Endothelial cell of umbilical vein (primary cell): ENCODE measurements at regions of chr11 and their contacts with region 1.

Region 1: GRCh38 chr11:70202898-70203748 is at the start of gene FADD:
- DNase-seq: peak; percentile 96
- H3K4me3 ChIP-seq: peak within 1 kb of the TSS; percentile 79 to 86 (median 86)
- H3K27ac ChIP-seq: peak within 1 kb of the TSS; percentile 98
- H3K4me1 ChIP-seq: peaks cover 13% of the 10 kb centered on the region
- H3K27me3 ChIP-seq: no peaks in the 10 kb centered on the region
- CTCF ChIP-seq: no peak
- POLR2A ChIP-seq: peak; percentile 93
- total RNA-seq, gene FADD: 42.5 and 45.1 TPM in 2 replicates

Region 2: DNA sequence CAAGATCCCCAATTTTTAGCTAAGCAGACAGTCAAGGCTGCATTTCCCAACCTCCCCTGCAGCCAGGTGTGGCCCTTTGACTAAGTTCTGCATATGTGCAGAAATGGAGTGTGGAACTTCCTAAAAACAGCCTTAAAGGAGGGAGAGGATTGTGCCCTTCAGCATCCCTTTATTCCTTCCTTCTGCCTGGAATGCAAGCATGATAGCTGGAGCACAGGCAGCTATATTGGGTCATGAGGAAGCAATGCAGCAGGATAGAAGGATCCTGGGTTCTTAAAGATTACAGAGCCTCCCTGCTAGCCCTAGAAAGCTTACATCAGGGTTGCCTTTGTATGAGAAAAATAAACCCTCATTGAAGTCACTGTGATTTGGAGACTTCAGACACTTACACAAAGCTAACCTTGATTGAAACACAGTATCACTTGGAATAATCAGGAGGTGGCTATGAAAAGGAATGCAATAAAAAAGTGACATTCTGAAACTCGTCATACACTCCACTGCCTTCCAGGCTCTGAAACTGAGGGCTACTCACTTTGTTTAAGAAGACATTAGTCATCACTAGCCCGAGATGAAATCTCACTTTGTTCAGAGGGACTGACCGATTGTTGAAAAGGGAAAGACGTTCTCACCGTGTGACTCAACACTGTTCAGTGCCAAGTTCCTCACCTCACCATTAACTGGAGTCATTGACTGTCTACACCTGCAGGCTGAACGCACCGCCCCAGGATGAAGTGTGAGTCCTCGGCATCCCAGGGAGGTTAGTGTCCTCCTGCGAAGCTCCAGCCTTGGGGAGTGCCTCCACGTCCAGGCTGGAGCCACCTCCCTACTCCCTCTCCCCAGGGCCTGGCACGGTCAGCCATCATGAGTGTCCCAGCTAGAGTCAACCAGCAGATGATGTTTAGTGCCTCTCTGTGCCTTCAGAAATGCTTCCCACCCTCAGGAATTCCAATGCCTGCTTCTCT is 30.2 kb after region 1 on chr11:
- CTCF ChIA-PET with region 1: interaction called, 3 read pairs
- POLR2A ChIA-PET with region 1: no interaction called
- dilution Hi-C with region 1: no loop called
- intact Hi-C with region 1: loop called (anchors 1 kb)
- DNase-seq: peak; percentile 79
- H3K4me3 ChIP-seq: no peak overlapping the region
- H3K27ac ChIP-seq: no peak overlapping the region
- H3K4me1 ChIP-seq: peaks cover 7% of the 10 kb centered on the region
- H3K27me3 ChIP-seq: no peaks in the 10 kb centered on the region
- CTCF ChIP-seq: no peak
- POLR2A ChIP-seq: no peak

Region 3: DNA sequence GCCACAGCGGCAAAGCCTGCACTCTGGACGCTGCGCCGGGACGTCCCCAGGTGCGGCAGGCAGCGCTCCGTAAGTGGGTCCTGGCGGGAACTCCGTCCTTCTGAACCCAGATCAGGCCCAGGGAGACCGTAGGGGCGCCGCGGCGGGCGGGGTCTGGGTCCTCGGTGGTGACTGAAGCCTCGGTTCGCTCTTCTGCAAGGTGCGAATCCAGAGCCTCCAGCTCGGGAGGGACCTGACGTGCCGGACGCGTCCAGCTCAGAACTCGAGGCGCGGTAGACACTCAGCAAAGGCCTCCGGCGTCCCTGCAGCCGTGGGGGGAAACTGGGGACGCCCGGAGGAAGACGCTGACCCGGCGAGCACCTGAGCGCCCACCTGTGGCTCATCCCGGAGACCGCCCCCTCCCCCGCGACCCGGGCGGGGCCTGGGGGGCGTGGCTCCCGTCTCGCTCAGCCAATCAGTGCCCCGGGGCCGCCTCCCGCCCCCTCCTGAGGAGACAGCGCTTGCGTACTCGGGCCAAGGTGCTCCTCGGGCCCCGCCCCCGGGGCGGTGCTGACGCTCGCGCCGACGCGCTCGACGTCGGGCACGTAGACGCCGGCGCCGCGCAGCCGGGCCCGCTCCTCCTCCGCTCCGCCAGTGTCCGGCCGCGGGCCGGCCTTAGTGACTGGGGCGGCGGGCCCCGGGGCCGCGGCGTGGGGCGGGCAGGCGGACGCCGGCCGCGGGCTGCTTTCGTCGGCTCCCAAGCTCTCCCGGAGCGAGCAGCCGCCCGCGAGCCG is 67.2 kb after region 1 on chr11 and contains the start of gene PPFIA1:
- CTCF ChIA-PET with region 1: no interaction called
- POLR2A ChIA-PET with region 1: no interaction called
- dilution Hi-C with region 1: no loop called
- intact Hi-C with region 1: loop called (anchors 1 kb)
- DNase-seq: peak; percentile 94
- H3K4me3 ChIP-seq: peak within 1 kb of the TSS; percentile 60 to 87 (median 86)
- H3K27ac ChIP-seq: peak within 1 kb of the TSS; percentile 89
- H3K4me1 ChIP-seq: peaks cover 15% of the 10 kb centered on the region
- H3K27me3 ChIP-seq: peaks cover 4 to 14% of the 10 kb centered on the region in 2 experiments
- CTCF ChIP-seq: no peak
- POLR2A ChIP-seq: peak; percentile 92
- total RNA-seq, gene PPFIA1: 60.7 and 60.9 TPM in 2 replicates

Region 4: GRCh38 chr11:70397983-70398833 is 195.1 kb after region 1 on chr11 and contains the start of gene CTTN:
- CTCF ChIA-PET with region 1: no interaction called
- POLR2A ChIA-PET with region 1: no interaction called
- dilution Hi-C with region 1: no loop called
- intact Hi-C with region 1: loop called (anchors 1 kb)
- DNase-seq: peak; percentile 87
- H3K4me3 ChIP-seq: peak within 1 kb of the TSS; percentile 84 to 89 (median 85)
- H3K27ac ChIP-seq: peak within 1 kb of the TSS; percentile 60
- H3K4me1 ChIP-seq: peaks cover 19% of the 10 kb centered on the region
- H3K27me3 ChIP-seq: no peaks in the 10 kb centered on the region
- CTCF ChIP-seq: no peak
- POLR2A ChIP-seq: peak; percentile 69
- total RNA-seq, gene CTTN: 307 and 330 TPM in 2 replicates